Esophagus squamous epithelium (tissue), 5 donors: ENCODE measurements at regions of chr4 and their contacts with region 1.

Region 1: DNA sequence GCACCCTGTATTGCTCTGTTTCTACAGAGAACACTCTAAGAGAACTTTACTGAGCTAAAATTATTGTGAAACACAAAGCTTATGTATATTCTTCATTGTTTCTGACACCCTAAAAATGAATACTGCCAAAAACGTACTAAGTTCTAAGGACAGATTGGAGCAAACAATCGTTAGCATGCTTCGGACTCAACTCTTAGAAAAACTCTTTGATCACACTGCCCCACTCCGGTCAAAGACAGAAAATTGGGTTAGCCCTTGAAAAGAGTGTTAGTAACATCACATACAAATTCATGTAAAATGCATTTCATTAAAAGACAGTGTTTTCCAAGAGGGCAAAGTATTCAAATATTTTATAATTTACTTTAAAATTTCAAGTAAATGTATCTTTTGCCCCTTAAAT is 177.4 kb downstream of the DCHS2 start:
- DNase-seq: no peak
- H3K4me3 ChIP-seq: no peak overlapping the region
- H3K27ac ChIP-seq: no peak overlapping the region
- H3K4me1 ChIP-seq: no peaks in the 10 kb centered on the region
- H3K27me3 ChIP-seq: no peaks in the 10 kb centered on the region
- CTCF ChIP-seq: peak in 2 of 6 experiments; percentile 8 to 18
- POLR2A ChIP-seq: no peak

Region 2: GRCh38 chr4:153643406-153644383 is 670.6 kb before region 1 on chr4:
- intact Hi-C with region 1: no loop called
- DNase-seq: no peak
- H3K4me3 ChIP-seq: no peak overlapping the region
- H3K27ac ChIP-seq: no peak overlapping the region
- H3K4me1 ChIP-seq: no peaks in the 10 kb centered on the region
- H3K27me3 ChIP-seq: no peaks in the 10 kb centered on the region
- CTCF ChIP-seq: peak in 5 of 6 experiments; percentile 36 to 64 (median 44)
- POLR2A ChIP-seq: no peak

Region 3: GRCh38 chr4:153791746-153792617 is 522.3 kb before region 1 on chr4:
- intact Hi-C with region 1: loop called (anchors 10 kb)
- DNase-seq: no peak
- H3K4me3 ChIP-seq: peak overlapping the region in 3 of 4 donors; percentile 0 to 65 (median 47)
- H3K27ac ChIP-seq: peak overlapping the region in 3 of 4 donors; percentile 54 to 79 (median 75)
- H3K4me1 ChIP-seq: peaks cover 22 to 51% (median 27%) of the 10 kb centered on the region in 3 donors
- H3K27me3 ChIP-seq: peaks cover 22 to 90% (median 37%) of the 10 kb centered on the region in 4 donors
- CTCF ChIP-seq: peak in 5 of 6 experiments; percentile 6 to 46 (median 21)
- POLR2A ChIP-seq: no peak

Region 4: GRCh38 chr4:154064244-154064643 is 250.0 kb before region 1 on chr4:
- intact Hi-C with region 1: no loop called
- DNase-seq: no peak
- H3K4me3 ChIP-seq: no peak overlapping the region
- H3K27ac ChIP-seq: no peak overlapping the region
- H3K4me1 ChIP-seq: no peaks in the 10 kb centered on the region
- H3K27me3 ChIP-seq: no peaks in the 10 kb centered on the region
- CTCF ChIP-seq: no peak
- POLR2A ChIP-seq: no peak